ENCODE measurements at regions of chr3 and their contacts with region 1.

Region 1: DNA sequence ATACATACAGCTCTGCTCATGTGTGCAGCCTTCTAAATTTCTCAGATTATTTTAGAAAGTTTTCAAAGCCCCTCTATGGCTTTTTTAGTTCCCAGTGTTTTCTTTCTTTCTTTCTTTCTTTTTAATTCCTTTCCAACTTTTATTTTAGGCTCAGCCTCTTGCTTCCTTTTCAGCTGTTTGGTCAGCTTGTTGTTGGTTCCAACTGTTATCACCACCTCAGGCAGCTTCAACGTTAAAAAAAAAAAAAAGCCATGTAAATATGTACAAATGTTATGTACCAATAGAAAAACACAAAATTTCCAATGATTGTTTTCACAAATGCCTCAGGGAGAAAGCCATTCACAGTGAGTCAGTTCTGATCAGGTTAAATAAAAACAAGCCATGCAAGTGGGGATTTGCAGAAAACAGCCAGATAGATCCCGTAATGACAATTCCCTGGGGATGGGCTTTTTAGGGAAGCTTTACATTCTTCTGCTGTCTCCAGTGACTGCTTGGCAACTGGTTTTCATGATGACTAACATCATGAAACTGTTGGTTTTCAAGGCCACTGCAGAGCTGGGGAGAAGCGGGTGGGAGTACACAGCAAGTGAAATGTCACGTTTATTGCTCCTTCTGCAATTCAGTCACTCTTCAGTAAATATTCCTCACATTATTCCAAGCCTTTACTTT is 908.4 kb downstream of the EPHA3 start:
- DNase-seq: no peak
- ATAC-seq: peak; percentile 71
- H3K4me3 ChIP-seq: no peak overlapping the region
- H3K27ac ChIP-seq: no peak overlapping the region
- H3K4me1 ChIP-seq: no peaks in the 10 kb centered on the region
- H3K27me3 ChIP-seq: no peaks in the 10 kb centered on the region
- CTCF ChIP-seq: no peak
- EP300 ChIP-seq: no peak
- POLR2A ChIP-seq: no peak
- RAD21 ChIP-seq: no peak

Region 2: GRCh38 chr3:90035643-90036042 is 19.8 kb after region 1 on chr3:
- CTCF ChIA-PET with region 1: interaction called, 8 read pairs
- POLR2A ChIA-PET with region 1: interaction called, 9 read pairs
- RAD21 ChIA-PET with region 1: interaction called, 33 read pairs
- SMC1A ChIA-PET with region 1: interaction called, 31 read pairs
- in situ Hi-C with region 1: no loop called
- intact Hi-C with region 1: no loop called
- DNase-seq: no peak
- ATAC-seq: peak; percentile 80
- H3K4me3 ChIP-seq: no peak overlapping the region
- H3K27ac ChIP-seq: no peak overlapping the region
- H3K4me1 ChIP-seq: no peaks in the 10 kb centered on the region
- H3K27me3 ChIP-seq: no peaks in the 10 kb centered on the region
- CTCF ChIP-seq: no peak
- EP300 ChIP-seq: peak; percentile 77 to 84; a peak in 2 of 4 replicates
- POLR2A ChIP-seq: no peak
- RAD21 ChIP-seq: no peak

Region 3: GRCh38 chr3:90044084-90044816 is 28.4 kb after region 1 on chr3:
- CTCF ChIA-PET with region 1: interaction called, 3 read pairs
- POLR2A ChIA-PET with region 1: interaction called, 3 read pairs
- RAD21 ChIA-PET with region 1: interaction called, 12 read pairs
- SMC1A ChIA-PET with region 1: interaction called, 15 read pairs
- in situ Hi-C with region 1: no loop called
- intact Hi-C with region 1: no loop called
- DNase-seq: no peak
- ATAC-seq: no peak
- H3K4me3 ChIP-seq: no peak overlapping the region
- H3K27ac ChIP-seq: no peak overlapping the region
- H3K4me1 ChIP-seq: no peaks in the 10 kb centered on the region
- H3K27me3 ChIP-seq: no peaks in the 10 kb centered on the region
- CTCF ChIP-seq: no peak
- EP300 ChIP-seq: no peak
- POLR2A ChIP-seq: no peak
- RAD21 ChIP-seq: no peak

Region 4: GRCh38 chr3:90055666-90056065 is 39.8 kb after region 1 on chr3:
- CTCF ChIA-PET with region 1: interaction called, 7 read pairs
- POLR2A ChIA-PET with region 1: no interaction called
- RAD21 ChIA-PET with region 1: interaction called, 11 read pairs
- SMC1A ChIA-PET with region 1: interaction called, 11 read pairs
- in situ Hi-C with region 1: no loop called
- intact Hi-C with region 1: no loop called
- DNase-seq: no peak
- ATAC-seq: peak; percentile 12; the same call in 1 of the 3 replicates
- H3K4me3 ChIP-seq: no peak overlapping the region
- H3K27ac ChIP-seq: no peak overlapping the region
- H3K4me1 ChIP-seq: no peaks in the 10 kb centered on the region
- H3K27me3 ChIP-seq: no peaks in the 10 kb centered on the region
- CTCF ChIP-seq: no peak
- EP300 ChIP-seq: no peak
- POLR2A ChIP-seq: no peak
- RAD21 ChIP-seq: no peak

Region 5: DNA sequence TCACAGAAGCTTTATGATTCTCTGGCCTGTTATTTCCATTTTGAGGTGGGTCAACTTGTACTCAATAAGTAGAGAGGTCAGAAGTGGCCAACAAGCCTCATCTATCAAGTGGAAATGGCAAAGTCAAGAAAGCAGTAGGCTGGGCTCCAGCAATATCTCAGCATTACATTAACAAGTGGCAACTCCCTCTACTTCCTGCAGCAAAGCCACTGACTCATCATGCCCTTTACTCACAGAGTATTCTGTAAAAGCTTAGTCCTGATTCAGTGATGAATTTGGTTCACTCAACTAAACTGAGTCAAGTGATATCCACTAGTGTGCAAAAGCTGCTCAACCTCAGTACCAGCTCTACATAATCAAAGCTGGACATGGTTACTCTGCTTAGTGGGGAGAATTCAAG is 46.2 kb after region 1 on chr3:
- CTCF ChIA-PET with region 1: no interaction called
- POLR2A ChIA-PET with region 1: interaction called, 4 read pairs
- RAD21 ChIA-PET with region 1: interaction called, 11 read pairs
- SMC1A ChIA-PET with region 1: interaction called, 11 read pairs
- in situ Hi-C with region 1: no loop called
- intact Hi-C with region 1: no loop called
- DNase-seq: no peak
- ATAC-seq: no peak
- H3K4me3 ChIP-seq: no peak overlapping the region
- H3K27ac ChIP-seq: no peak overlapping the region
- H3K4me1 ChIP-seq: no peaks in the 10 kb centered on the region
- H3K27me3 ChIP-seq: no peaks in the 10 kb centered on the region
- CTCF ChIP-seq: no peak
- EP300 ChIP-seq: no peak
- POLR2A ChIP-seq: no peak
- RAD21 ChIP-seq: no peak

Measured in GM12878 (cell line).